ENCODE measurements at regions of chr2 and their contacts with region 1.

Region 1: DNA sequence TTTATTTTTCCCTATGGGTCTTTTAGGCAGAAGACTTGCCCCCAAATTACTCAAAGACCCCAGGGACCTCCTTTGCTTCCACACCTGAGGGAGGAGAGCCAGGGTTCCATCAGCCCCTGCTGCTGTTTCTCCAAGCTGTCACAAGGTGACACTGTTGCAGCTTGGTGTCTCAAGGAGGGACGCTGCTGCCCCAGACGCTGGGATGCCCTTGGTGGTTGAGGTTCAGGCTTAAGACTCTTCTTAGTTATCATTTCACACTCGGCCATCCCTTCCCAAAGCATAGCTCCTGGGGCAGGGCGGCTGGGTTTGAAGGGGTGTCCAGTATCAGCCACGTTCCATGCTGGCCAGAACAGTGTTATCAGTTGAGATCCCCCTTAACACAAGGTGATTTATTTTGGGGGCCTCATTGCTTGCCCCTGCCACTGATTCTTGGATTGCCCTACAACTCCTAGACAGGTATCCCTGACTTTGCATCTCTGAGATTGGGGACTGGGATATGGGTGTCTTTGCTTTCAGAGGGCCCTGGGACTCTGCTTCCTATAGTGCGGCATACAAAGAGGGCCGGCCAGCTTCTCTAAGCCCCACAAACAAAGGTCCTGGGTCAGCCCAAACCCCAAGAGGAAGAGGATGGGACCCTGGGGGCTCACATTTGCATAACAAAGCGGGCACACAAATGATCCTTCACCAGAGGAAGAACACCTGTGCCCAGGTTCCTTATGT is 22.7 kb downstream of the GPR55 start:
- DNase-seq: peak; percentile 70
- H3K4me3 Mint-ChIP-seq: no peak overlapping the region
- H3K27ac Mint-ChIP-seq: no peak overlapping the region
- H3K4me1 Mint-ChIP-seq: peaks cover 34% of the 10 kb centered on the region
- H3K27me3 Mint-ChIP-seq: peaks cover 15% of the 10 kb centered on the region

Region 2: GRCh38 chr2:230326453-230327417 is 575.6 kb before region 1 on chr2 and contains the start of gene SP140L:
- CTCF ChIA-PET with region 1: no interaction called
- intact Hi-C with region 1: no loop called
- DNase-seq: peak; percentile 88
- H3K4me3 Mint-ChIP-seq: peak within 1 kb of the TSS; percentile 96
- H3K27ac Mint-ChIP-seq: peak within 1 kb of the TSS; percentile 99
- H3K4me1 Mint-ChIP-seq: peaks cover 60% of the 10 kb centered on the region
- H3K27me3 Mint-ChIP-seq: no peaks in the 10 kb centered on the region
- total RNA-seq, gene SP140L: 41.8 to 44.7 TPM

Region 3: GRCh38 chr2:230824406-230824978 is 77.8 kb before region 1 on chr2:
- CTCF ChIA-PET with region 1: interaction called, 6 read pairs
- intact Hi-C with region 1: loop called (anchors 1 kb)
- DNase-seq: peak; percentile 59
- H3K4me3 Mint-ChIP-seq: no peak overlapping the region
- H3K27ac Mint-ChIP-seq: no peak overlapping the region
- H3K4me1 Mint-ChIP-seq: peaks cover 5% of the 10 kb centered on the region
- H3K27me3 Mint-ChIP-seq: peaks cover 27% of the 10 kb centered on the region

Region 4: GRCh38 chr2:230864598-230865306 is 37.6 kb before region 1 on chr2 and contains the start of gene ITM2C:
- CTCF ChIA-PET with region 1: no interaction called
- intact Hi-C with region 1: loop called (anchors 1 kb)
- DNase-seq: peak; percentile 84
- H3K4me3 Mint-ChIP-seq: peak within 1 kb of the TSS; percentile 82
- H3K27ac Mint-ChIP-seq: peak within 1 kb of the TSS; percentile 3
- H3K4me1 Mint-ChIP-seq: peaks cover 45% of the 10 kb centered on the region
- H3K27me3 Mint-ChIP-seq: peaks cover 4% of the 10 kb centered on the region
- total RNA-seq, gene ITM2C: 13.0 to 13.6 TPM

Region 5: GRCh38 chr2:230924470-230925341 is 22.4 kb after region 1 on chr2 and contains the start of gene GPR55:
- CTCF ChIA-PET with region 1: interaction called, 7 read pairs
- intact Hi-C with region 1: loop called (anchors 1 kb)
- DNase-seq: peak; percentile 83
- H3K4me3 Mint-ChIP-seq: peak within 1 kb of the TSS; percentile 60
- H3K27ac Mint-ChIP-seq: peak within 1 kb of the TSS; percentile 91
- H3K4me1 Mint-ChIP-seq: peaks cover 63% of the 10 kb centered on the region
- H3K27me3 Mint-ChIP-seq: peaks cover 2% of the 10 kb centered on the region
- total RNA-seq, gene GPR55: 0.35 to 0.43 TPM

Region 6: GRCh38 chr2:230987137-230988020 is 85.0 kb after region 1 on chr2:
- CTCF ChIA-PET with region 1: interaction called, 151 read pairs
- intact Hi-C with region 1: loop called (anchors 1 kb)
- DNase-seq: peak; percentile 80
- H3K4me3 Mint-ChIP-seq: peak overlapping the region; percentile 45
- H3K27ac Mint-ChIP-seq: no peak overlapping the region
- H3K4me1 Mint-ChIP-seq: peaks cover 22% of the 10 kb centered on the region
- H3K27me3 Mint-ChIP-seq: peaks cover 21% of the 10 kb centered on the region